Activated CD8-positive, alpha-beta T cell treated with anti-CD3 and anti-CD28 coated beads for 36 hours (primary cell): ENCODE measurements at regions of chr15 and their contacts with region 1.

Region 1: GRCh38 chr15:50908210-50909009 is at the start of gene AP4E1:
- DNase-seq: peak; percentile 94
- ATAC-seq: peak; percentile 67
- H3K4me3 Mint-ChIP-seq: peak within 1 kb of the TSS; percentile 81
- H3K27ac Mint-ChIP-seq: peak within 1 kb of the TSS; percentile 100
- H3K4me1 Mint-ChIP-seq: peaks cover 15% of the 10 kb centered on the region
- H3K27me3 Mint-ChIP-seq: no peaks in the 10 kb centered on the region
- CTCF ChIP-seq: peak; percentile 92
- total RNA-seq, gene AP4E1: 16.6 TPM

Region 2: DNA sequence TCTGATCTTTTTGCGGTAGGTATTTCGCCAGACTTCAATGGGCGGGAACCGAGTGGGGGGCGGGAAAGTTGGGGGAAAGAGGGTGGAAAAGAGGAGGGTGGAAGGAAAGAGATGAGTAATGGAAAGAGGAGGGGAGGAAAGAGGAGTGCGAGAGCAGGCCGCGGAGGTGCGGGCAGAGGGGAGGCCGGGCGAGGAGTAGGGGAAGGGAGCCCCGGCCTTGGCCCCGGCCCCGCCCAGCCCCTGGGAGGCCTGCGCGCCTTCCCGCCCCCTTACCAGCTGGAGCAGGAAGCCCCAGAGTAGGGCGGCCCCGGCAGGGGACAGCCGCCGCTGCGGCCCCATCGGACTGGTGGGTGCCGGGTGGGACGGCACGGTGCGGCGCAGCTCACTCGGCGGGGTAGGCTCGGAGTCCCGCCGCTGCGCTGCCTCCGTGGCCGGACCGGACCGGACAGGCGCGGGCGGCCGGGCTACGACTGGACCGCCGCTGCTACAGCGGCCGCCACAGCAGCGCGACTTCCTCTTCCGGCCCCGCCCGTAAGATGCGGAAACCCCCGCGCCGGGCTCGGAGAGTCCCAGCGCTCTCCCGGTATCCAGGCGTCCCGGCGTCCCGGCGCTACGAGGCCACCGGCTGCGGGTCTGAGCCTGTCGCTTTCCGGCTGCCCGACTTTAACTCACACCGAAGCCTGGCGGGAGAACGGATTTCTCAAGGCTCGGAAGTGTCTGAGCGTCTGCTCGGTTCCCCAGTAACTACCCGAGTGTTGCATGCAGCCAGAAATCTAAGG is 143.0 kb before region 1 on chr15 and contains the start of gene SPPL2A:
- CTCF ChIA-PET with region 1: no interaction called
- POLR2A ChIA-PET with region 1: interaction called, 13 read pairs
- intact Hi-C with region 1: no loop called
- DNase-seq: peak; percentile 93
- ATAC-seq: peak; percentile 90
- H3K4me3 Mint-ChIP-seq: peak within 1 kb of the TSS; percentile 88
- H3K27ac Mint-ChIP-seq: peak within 1 kb of the TSS; percentile 99
- H3K4me1 Mint-ChIP-seq: peaks cover 54% of the 10 kb centered on the region
- H3K27me3 Mint-ChIP-seq: no peaks in the 10 kb centered on the region
- CTCF ChIP-seq: no peak
- total RNA-seq, gene SPPL2A: 47.7 to 48.8 TPM

Region 3: GRCh38 chr15:50890771-50891558 is 17.4 kb before region 1 on chr15:
- CTCF ChIA-PET with region 1: interaction called, 7 read pairs
- POLR2A ChIA-PET with region 1: interaction called, 11 read pairs
- intact Hi-C with region 1: no loop called
- DNase-seq: no peak
- ATAC-seq: no peak
- H3K4me3 Mint-ChIP-seq: no peak overlapping the region
- H3K27ac Mint-ChIP-seq: no peak overlapping the region
- H3K4me1 Mint-ChIP-seq: peaks cover 12% of the 10 kb centered on the region
- H3K27me3 Mint-ChIP-seq: no peaks in the 10 kb centered on the region
- CTCF ChIP-seq: no peak